H1 (cell line): ENCODE measurements at regions of chr11 and their contacts with region 1.

Region 1: GRCh38 chr11:91513734-91514133 is 710.9 kb upstream of the FAT3 start:
- DNase-seq: no peak
- H3K4me3 ChIP-seq: no peak overlapping the region
- H3K27ac ChIP-seq: no peak overlapping the region
- H3K4me1 ChIP-seq: 0 out of 7 replicates have a peak, but pooled peaks cover 0 to 3% (median 0%) of the 10 kb centered on the region in 4 experiments
- H3K27me3 ChIP-seq: no peaks in the 10 kb centered on the region
- CTCF ChIP-seq: peak in 1 of 3 experiments; percentile 40; a peak in 2 of 4 replicates
- EP300 ChIP-seq: no peak
- POLR2A ChIP-seq: no peak
- RAD21 ChIP-seq: peak; percentile 48 to 54; a peak in 3 of 4 replicates

Region 2: GRCh38 chr11:91459840-91460239 is 53.9 kb before region 1 on chr11:
- CTCF ChIA-PET with region 1: no interaction called
- POLR2A ChIA-PET with region 1: no interaction called
- DNase-seq: no peak
- H3K4me3 ChIP-seq: no peak overlapping the region
- H3K27ac ChIP-seq: no peak overlapping the region
- H3K4me1 ChIP-seq: no peaks in the 10 kb centered on the region
- H3K27me3 ChIP-seq: no peaks in the 10 kb centered on the region
- CTCF ChIP-seq: no peak
- EP300 ChIP-seq: no peak
- POLR2A ChIP-seq: no peak
- RAD21 ChIP-seq: no peak

Region 3: DNA sequence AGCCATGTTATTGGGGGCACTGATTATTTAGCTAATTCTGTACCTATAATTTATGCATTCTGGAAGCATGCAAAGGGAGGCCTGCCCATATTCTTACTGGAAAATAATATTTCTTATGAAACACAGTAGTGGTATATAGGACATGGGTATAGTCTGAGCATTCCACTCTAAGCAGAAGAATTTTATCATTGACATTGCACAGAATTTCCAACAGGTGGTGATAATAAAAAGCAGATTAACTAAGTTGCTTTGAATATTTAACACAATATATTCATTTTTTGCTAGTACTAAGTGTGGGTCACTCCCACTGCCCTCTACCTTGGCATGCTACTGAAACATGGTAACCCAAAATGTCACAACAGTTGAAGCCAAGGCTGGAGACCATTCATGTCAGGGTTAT is 17.9 kb before region 1 on chr11:
- CTCF ChIA-PET with region 1: interaction called, 11 read pairs
- POLR2A ChIA-PET with region 1: no interaction called
- DNase-seq: no peak
- H3K4me3 ChIP-seq: no peak overlapping the region
- H3K27ac ChIP-seq: no peak overlapping the region
- H3K4me1 ChIP-seq: 0 out of 7 replicates have a peak, but pooled peaks cover 0 to 2% (median 0%) of the 10 kb centered on the region in 4 experiments
- H3K27me3 ChIP-seq: no peaks in the 10 kb centered on the region
- CTCF ChIP-seq: no peak
- EP300 ChIP-seq: no peak
- POLR2A ChIP-seq: no peak
- RAD21 ChIP-seq: no peak

Region 4: GRCh38 chr11:91563176-91563575 is 49.4 kb after region 1 on chr11:
- CTCF ChIA-PET with region 1: no interaction called
- POLR2A ChIA-PET with region 1: no interaction called
- DNase-seq: no peak
- H3K4me3 ChIP-seq: no peak overlapping the region
- H3K27ac ChIP-seq: no peak overlapping the region; the same call in 1 of the 2 replicates
- H3K4me1 ChIP-seq: no peaks in the 10 kb centered on the region
- H3K27me3 ChIP-seq: no peaks in the 10 kb centered on the region
- CTCF ChIP-seq: no peak
- EP300 ChIP-seq: no peak
- POLR2A ChIP-seq: no peak
- RAD21 ChIP-seq: no peak

Region 5: DNA sequence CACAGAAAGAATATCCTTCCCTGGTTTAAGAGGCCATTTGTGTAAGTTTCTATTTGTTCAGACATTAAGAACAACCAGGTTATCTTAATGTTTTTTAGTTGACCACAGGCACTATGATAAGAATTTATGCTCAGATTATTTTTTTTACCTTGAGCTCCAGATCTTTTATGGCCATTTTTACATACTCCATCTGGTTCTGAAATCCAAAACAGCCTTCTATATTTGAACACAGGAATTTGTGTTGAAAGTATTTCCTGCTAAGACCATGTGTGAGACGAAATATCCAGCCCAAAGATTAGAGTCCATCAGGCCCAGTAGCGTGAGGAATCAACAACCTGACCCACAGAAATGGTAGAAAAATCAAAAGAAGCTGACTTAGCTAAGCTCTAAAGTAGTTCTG is 141.0 kb after region 1 on chr11:
- CTCF ChIA-PET with region 1: no interaction called
- POLR2A ChIA-PET with region 1: no interaction called
- DNase-seq: no peak
- H3K4me3 ChIP-seq: no peak overlapping the region
- H3K27ac ChIP-seq: no peak overlapping the region
- H3K4me1 ChIP-seq: no peaks in the 10 kb centered on the region
- H3K27me3 ChIP-seq: no peaks in the 10 kb centered on the region
- CTCF ChIP-seq: no peak
- EP300 ChIP-seq: no peak
- POLR2A ChIP-seq: no peak
- RAD21 ChIP-seq: no peak